ENCODE measurements at regions of chr4 and their contacts with region 1.

Region 1: DNA sequence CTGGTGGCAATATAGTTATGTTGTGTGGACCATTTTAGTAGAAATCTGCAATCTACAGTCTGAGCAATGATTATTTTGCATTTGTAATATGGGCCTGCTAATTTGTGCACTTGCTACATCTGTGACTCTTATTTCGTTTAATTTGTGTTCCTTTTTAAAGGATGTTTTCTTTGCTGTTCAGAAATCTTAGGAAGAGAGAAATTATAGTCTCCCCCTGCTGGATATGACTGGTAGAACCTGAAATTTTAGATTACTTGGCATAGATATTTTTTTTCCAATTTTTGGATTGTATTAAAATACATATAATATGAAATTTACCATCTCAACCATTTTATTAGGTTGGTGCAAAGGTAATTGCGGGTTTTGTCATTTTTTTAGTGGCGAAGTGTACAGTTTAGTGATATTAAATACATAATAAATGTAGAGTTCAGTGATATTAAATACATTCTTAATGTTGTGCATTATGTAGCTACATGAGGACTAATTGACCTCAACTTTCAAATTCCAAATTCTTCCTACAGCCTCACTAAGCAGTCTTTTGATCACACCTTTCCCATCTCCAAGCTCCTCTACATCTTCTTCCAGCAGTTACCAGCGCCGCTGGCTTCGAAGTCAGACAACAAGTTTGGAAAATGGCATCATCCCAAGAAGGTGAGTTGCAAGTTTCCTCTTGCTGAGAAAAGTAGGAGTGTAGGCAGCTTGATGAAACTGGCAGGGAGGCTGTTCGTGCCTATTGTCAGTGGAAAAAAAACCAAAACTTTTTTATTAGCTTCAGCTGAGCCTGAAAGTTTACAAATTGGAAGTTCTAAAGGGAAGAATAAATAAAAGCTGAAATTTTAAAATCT is 82.2 kb downstream of the FNIP2 start:
- DNase-seq: no peak
- H3K4me3 ChIP-seq: no peak overlapping the region
- H3K27ac ChIP-seq: no peak overlapping the region
- H3K4me1 ChIP-seq: no peaks in the 10 kb centered on the region
- H3K27me3 ChIP-seq: no peaks in the 10 kb centered on the region
- CTCF ChIP-seq: peak; percentile 62 to 76 (median 68)
- POLR2A ChIP-seq: no peak

Region 2: GRCh38 chr4:159027535-159027934 is 176.5 kb after region 1 on chr4:
- intact Hi-C with region 1: no loop called
- DNase-seq: no peak
- H3K4me3 ChIP-seq: no peak overlapping the region
- H3K27ac ChIP-seq: no peak overlapping the region
- H3K4me1 ChIP-seq: no peaks in the 10 kb centered on the region
- H3K27me3 ChIP-seq: no peaks in the 10 kb centered on the region
- CTCF ChIP-seq: no peak
- POLR2A ChIP-seq: no peak

Region 3: DNA sequence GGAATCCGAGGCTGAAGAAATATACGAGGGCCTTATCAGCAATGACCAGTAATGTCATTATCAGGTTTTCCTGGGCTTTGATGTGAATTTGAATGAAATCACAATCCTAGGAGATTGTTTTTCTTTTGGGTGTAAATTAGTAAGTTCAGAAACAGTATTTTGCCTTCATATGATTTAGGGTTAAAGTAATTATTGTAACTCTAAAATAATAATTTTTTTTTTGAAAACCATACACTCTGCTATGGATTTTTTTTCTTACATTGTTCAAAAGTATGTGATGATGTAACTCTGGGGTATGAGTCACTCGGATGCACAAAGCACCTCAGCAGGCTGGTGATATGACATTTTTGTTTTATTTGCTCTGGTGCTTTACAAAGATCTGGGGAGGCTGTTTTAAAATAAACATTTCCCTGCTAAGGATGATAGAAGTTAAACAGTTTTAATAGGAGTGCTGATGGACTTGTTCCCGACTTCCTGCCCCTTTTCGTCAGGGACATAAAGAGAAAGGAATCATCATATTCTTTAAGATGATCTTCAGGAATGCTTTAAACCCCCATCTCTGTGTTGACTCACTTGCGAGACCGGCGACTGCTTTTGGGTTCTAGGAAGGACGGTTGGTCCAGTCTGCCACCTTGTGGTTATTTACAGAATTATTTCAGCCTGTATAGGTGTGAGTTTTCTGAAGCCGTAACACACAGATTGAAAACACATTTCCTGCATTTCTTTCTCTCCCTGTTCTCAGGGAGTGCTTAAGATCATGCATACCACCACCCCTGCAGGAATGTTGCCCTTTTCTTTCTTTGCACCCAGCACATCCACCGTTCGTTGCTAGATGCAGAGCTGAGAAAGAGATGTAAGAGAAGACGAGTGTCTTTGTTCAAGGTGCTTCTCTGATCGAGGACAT is 324.3 kb after region 1 on chr4:
- intact Hi-C with region 1: loop called (anchors 5 kb)
- DNase-seq: peak; percentile 32 to 66
- H3K4me3 ChIP-seq: no peak overlapping the region
- H3K27ac ChIP-seq: peak overlapping the region in 1 of 2 donors; percentile 77
- H3K4me1 ChIP-seq: no peaks in the 10 kb centered on the region
- H3K27me3 ChIP-seq: no peaks in the 10 kb centered on the region
- CTCF ChIP-seq: peak; percentile 77 to 86 (median 81)
- POLR2A ChIP-seq: no peak